Transverse colon (tissue), 4 donors: ENCODE measurements at regions of chr13 and their contacts with region 1.

Region 1: DNA sequence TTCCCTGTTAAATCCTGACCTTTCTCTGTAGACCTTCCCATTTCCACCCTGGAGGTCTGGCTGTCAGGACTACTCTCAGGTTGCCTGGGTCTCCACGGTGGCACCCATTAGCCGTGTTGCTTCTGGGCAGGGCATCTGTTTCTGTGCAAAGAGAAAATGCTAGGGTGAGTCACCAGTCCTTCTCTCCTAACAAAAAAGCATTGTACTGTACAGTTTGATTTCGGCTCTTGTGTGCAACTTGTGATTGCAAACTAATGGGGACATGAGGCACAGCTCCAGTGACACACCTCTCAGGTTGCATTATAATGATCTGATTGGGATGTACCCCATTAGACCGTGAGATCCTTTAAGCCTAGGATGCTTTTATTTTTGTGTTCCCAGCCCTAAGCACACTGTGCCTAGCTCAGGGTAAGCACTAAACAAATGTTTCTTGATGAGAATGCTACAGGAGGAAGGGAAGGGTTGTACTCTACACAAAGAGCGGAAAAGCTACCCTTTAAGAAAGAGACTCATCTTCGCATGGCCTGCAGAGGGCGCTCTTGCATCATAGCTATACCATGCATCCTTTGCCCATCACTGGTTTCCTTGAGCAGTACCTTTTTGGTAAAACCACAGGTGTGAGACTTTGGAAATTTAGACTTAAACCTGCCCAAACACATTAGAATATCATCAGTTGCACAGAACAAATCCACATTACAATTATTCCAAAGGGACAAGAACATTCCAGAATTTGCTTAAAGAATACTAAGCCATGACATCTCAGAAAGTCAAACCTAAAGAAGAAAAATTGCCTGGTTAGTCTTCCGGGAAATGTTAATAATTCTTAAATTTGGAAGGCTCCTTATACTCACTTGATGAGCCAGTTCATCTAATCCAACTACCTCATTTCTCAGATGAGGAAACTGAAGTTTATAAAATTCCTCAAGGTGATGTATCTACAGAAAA is 20.3 kb upstream of the TRIM13 start:
- DNase-seq: peak; percentile 81
- H3K4me3 ChIP-seq: no peak overlapping the region
- H3K27ac ChIP-seq: no peak overlapping the region
- H3K4me1 ChIP-seq: peaks cover 0 to 9% (median 0%) of the 10 kb centered on the region in 4 donors
- H3K27me3 ChIP-seq: no peaks in the 10 kb centered on the region
- CTCF ChIP-seq: peak; percentile 83 to 90 (median 89)
- EP300 ChIP-seq: no peak
- POLR2A ChIP-seq: no peak

Region 2: GRCh38 chr13:49549289-49549688 is 427.3 kb before region 1 on chr13:
- in situ Hi-C with region 1: no loop called
- intact Hi-C with region 1: no loop called
- DNase-seq: no peak
- H3K4me3 ChIP-seq: no peak overlapping the region
- H3K27ac ChIP-seq: no peak overlapping the region
- H3K4me1 ChIP-seq: no peaks in the 10 kb centered on the region
- H3K27me3 ChIP-seq: no peaks in the 10 kb centered on the region
- CTCF ChIP-seq: no peak
- EP300 ChIP-seq: no peak
- POLR2A ChIP-seq: no peak

Region 3: GRCh38 chr13:49679246-49679645 is 297.3 kb before region 1 on chr13:
- in situ Hi-C with region 1: no loop called
- intact Hi-C with region 1: no loop called
- DNase-seq: no peak
- H3K4me3 ChIP-seq: no peak overlapping the region
- H3K27ac ChIP-seq: no peak overlapping the region
- H3K4me1 ChIP-seq: peaks cover 0 to 11% (median 3%) of the 10 kb centered on the region in 4 donors
- H3K27me3 ChIP-seq: no peaks in the 10 kb centered on the region
- CTCF ChIP-seq: no peak
- EP300 ChIP-seq: no peak
- POLR2A ChIP-seq: no peak

Region 4: DNA sequence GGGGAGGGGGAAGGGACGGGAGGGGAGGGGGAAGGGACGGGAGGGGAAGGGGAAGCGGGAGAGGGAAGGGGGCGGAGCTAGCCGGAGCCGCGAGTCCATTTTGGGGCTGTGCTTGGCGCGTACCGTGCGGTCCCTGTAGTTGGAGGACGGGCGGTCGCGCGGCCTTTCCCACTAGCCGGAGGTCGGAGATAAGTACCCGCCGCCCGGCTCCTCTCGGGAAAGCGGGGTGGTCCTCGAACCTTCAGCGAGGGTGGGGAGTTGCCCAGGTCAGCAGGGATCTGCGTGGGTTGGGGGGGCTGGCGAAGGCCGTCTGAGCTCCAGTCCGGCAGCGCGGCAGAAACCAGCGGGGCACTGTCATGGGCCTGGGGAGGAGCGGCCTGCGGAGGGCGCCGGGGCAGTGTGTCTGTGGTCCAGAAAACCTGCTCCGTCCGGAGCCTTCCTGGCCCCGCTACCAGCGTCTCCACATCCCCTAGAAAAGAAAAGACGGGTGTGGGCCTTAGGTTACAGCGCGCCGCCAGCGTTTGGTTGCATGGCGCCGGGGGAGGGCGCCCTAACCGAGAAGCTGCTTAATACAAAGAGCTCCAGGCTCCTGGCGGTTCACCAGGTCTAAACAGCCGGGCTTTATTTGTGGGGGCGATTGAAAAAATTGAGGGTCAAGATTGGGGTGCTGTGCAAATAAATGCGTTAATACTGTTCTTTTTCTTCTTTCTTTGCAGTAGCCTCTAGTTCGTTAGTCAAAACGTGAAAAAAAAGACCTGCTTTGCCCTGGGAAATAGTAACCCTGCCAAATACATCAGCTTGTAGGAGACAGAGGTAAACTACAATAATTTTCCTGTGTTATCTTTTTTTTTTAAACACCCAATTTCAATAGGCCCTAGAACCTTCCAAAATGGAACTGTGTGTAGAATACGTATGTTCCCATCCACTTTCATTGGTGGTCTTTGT is 20.6 kb after region 1 on chr13 and contains the start of gene TRIM13:
- in situ Hi-C with region 1: no loop called
- intact Hi-C with region 1: no loop called
- DNase-seq: peak; percentile 92
- H3K4me3 ChIP-seq: peak within 1 kb of the TSS; percentile 81 to 99 (median 88)
- H3K27ac ChIP-seq: peak within 1 kb of the TSS; percentile 96 to 100 (median 98)
- H3K4me1 ChIP-seq: peaks cover 31 to 52% (median 49%) of the 10 kb centered on the region in 4 donors
- H3K27me3 ChIP-seq: no peaks in the 10 kb centered on the region
- CTCF ChIP-seq: peak; percentile 69 to 86 (median 73)
- EP300 ChIP-seq: no peak
- POLR2A ChIP-seq: no peak
- total RNA-seq, gene TRIM13: 5.6 to 30.6 (median 15.0) TPM

Region 5: DNA sequence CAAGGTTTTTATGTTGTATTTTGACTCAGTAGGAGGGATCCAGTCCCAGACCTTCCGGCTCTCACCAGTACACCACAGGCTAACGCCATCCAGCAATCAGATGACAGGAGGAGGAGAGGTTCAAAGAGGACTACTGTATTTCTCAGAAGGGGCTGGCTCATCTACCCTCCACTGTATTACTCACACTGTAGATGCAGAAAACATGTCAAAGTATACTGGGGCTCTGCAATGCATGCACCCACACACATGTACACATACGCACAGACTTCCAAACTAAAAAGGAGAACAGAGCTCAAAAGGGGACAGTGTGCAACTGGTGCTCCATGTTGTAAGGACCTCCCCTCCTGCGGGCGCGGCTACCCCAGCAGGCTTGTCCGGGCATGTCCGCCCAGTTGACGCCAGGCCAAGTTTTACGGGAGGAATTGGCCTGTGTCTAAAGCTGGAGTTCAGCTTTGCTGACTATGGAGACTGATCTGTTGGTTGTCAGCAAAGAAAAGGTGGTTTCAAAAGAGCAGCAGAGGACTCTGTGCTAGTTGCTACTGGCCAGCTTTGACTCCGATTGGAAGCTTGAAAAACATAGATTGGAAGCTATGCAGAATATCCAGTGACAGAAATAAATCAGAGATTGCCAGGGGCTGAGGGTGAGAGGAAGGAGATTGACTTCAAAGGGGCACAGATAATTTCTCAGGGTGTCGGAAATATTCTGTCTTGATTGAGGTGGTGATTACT is 552.7 kb after region 1 on chr13:
- in situ Hi-C with region 1: loop called in 3 of 4 experiments (anchors 10 to 25 kb)
- intact Hi-C with region 1: no loop called
- DNase-seq: peak; percentile 84
- H3K4me3 ChIP-seq: no peak overlapping the region
- H3K27ac ChIP-seq: peak overlapping the region; percentile 52 to 76 (median 64)
- H3K4me1 ChIP-seq: peaks cover 20 to 43% (median 21%) of the 10 kb centered on the region in 4 donors
- H3K27me3 ChIP-seq: no peaks in the 10 kb centered on the region
- CTCF ChIP-seq: no peak
- EP300 ChIP-seq: no peak
- POLR2A ChIP-seq: no peak

Region 6: GRCh38 chr13:50801087-50801931 is 824.7 kb after region 1 on chr13:
- in situ Hi-C with region 1: loop called in 3 of 4 experiments (anchors 5 to 25 kb)
- intact Hi-C with region 1: no loop called
- DNase-seq: peak; percentile 65
- H3K4me3 ChIP-seq: no peak overlapping the region
- H3K27ac ChIP-seq: peak overlapping the region in 1 of 4 donors; percentile 2
- H3K4me1 ChIP-seq: peaks cover 0 to 12% (median 1%) of the 10 kb centered on the region in 4 donors
- H3K27me3 ChIP-seq: no peaks in the 10 kb centered on the region
- CTCF ChIP-seq: peak; percentile 61 to 68 (median 68)
- EP300 ChIP-seq: no peak
- POLR2A ChIP-seq: no peak

Region 7: DNA sequence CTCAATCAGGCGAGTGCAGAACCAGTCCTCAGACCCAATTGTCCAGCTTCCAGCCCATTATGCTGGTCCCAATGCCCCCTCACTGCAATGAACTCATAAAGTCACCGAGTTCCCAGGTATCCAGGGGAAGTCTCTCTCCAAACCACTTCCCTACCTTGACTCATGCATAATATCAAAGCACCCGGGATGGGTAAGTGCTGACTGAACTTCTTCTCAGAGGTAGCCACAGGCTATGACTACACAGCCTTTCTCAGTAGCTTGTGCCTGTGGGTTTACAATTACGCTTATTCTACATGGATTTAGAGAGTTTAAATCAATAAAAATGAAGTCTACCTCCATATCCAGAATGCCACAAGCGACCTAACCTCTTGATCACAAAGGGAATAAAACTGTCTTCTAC is 1136.2 kb after region 1 on chr13:
- in situ Hi-C with region 1: no loop called
- intact Hi-C with region 1: no loop called
- DNase-seq: no peak
- H3K4me3 ChIP-seq: no peak overlapping the region
- H3K27ac ChIP-seq: no peak overlapping the region
- H3K4me1 ChIP-seq: no peaks in the 10 kb centered on the region
- H3K27me3 ChIP-seq: no peaks in the 10 kb centered on the region
- CTCF ChIP-seq: no peak
- EP300 ChIP-seq: no peak
- POLR2A ChIP-seq: no peak